ENCODE measurements at regions of chr3 and their contacts with region 1.

Region 1: DNA sequence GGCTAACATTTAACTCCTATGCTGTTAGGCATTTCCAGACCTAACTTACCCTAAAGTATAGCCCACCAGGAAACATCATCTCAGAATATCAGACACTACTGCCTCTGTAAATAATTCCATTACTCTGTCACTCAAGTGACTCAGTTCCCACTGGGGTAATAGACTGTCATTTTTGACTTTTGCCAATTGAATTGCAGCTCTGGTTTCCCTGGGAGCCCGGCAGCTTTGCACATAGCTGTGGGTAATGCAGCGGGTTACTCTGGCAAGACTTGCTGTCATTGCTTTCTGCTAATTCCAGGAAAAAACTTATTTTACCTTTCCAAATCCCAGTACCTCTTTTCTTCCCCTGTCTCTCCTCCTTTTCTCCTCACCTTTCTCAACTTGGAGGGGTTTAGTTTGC is 12.5 kb upstream of the NRROS start:
- DNase-seq: no peak
- ATAC-seq: no peak
- H3K4me3 Mint-ChIP-seq: no peak overlapping the region
- H3K27ac Mint-ChIP-seq: no peak overlapping the region
- H3K4me1 Mint-ChIP-seq: peaks cover 23 to 53% (median 46%) of the 10 kb centered on the region in 4 donors
- H3K27me3 Mint-ChIP-seq: no peaks in the 10 kb centered on the region

Region 2: GRCh38 chr3:196639483-196640296 is 12.6 kb after region 1 on chr3 and contains the start of gene NRROS:
- POLR2A ChIA-PET with region 1: interaction called, 20 read pairs
- DNase-seq: peak; percentile 15 to 72 (median 45)
- ATAC-seq: peak; percentile 70 to 73
- H3K4me3 Mint-ChIP-seq: peak within 1 kb of the TSS; percentile 72 to 90 (median 85)
- H3K27ac Mint-ChIP-seq: peak within 1 kb of the TSS; percentile 84 to 93 (median 88)
- H3K4me1 Mint-ChIP-seq: peaks cover 18 to 85% (median 69%) of the 10 kb centered on the region in 4 donors
- H3K27me3 Mint-ChIP-seq: no peaks in the 10 kb centered on the region
- polyA plus RNA-seq, gene NRROS: 0.29 to 0.92 (median 0.87) TPM